ENCODE measurements at regions of chr3 and their contacts with region 1.

Region 1: GRCh38 chr3:87350364-87351199 is 74.2 kb upstream of the POU1F1 start:
- DNase-seq: no peak
- ATAC-seq: peak; percentile 80

Region 2: GRCh38 chr3:88003115-88003755 is 652.7 kb after region 1 on chr3:
- intact Hi-C with region 1: loop called in 1 of 2 experiments (anchors 10 kb)
- DNase-seq: no peak
- ATAC-seq: peak; percentile 49

Region 3: DNA sequence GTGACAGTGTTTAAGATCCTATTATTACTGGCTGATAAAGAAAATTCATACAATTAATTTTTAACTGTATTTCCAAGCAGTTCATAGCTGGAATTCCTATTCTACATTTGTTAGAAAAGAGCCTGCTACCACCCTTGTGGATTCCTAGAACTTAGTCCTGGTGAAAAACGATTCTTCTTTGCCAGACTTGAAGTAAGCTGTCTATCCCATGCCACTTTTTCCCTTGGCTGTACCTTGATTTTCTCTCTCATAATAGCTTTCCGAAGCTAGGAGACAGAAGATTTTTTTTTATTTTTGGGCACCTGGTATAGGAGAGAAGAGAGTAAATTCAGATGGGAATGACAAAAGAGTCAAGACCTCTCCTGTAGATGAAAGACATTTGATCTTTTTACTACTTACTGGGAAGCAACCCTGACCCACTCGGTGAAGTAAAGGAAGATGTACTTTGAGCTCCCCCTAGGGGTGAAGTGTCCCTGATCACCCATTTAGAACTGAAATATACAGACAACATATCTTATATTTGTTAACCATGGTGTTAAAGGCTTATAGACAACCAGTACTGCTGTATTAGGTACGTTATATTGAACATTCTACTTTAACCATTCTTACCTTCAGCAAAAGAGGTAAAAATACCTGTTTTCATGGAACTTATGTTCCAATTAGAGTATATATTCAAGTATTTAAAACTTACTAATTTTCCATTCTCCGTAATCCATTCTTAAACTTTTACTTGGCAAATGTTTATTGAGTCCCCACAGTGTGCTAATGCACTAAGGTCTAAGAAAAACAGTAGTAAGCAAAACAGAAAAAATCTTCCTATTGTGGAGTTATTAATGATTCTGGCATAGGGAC is 763.0 kb after region 1 on chr3:
- intact Hi-C with region 1: loop called in 1 of 2 experiments (anchors 10 kb)
- DNase-seq: peak; percentile 28 to 49
- ATAC-seq: peak; percentile 90

Measured in left colon (tissue), 2 donors.